Sciatic nerve (tissue), 2 donors: ENCODE measurements at regions of chr21 and their contacts with region 1.

Region 1: DNA sequence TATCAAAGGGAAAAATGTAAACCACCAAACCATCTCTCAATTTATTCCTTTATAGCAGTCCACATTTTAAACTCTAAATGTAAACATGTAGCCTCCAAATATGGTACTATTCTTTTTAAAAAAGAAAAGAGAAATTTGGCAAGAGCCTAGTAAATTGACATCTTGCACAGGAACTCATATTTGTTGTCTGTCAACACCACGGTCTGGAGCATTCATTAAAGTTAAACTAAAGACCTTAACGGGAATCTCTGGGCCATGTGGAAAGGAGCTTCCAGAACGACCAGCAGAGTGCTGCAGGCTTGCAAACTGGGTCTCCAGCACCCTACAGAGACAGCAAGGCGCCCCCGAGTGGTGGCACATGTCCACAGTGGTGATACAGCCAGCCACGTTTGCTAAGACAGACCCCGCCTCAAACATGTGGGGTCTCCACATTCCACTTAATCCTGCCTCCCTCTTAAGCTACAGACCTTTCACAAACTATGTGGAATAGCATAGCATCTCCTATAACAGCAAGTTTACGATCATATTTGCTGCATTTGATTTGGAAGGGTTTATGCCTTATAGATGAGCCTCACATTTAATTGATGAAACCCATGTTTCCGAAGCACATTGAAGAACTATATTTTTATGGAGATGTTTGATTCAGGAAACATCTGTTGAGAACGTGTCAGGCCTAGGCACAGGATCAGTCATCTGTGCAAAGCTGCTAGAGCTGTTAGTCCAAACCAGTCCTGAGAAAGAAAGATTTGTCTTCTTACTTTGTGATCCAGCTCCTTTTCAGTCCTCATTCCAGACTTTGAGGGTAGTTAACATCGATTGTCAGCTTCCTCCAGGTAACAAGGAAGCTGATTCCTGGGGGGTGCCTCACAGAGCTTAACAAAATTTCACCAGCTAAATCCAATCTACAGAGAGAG is 96.4 kb upstream of the BACE2 start:
- DNase-seq: no peak
- ATAC-seq: no peak

Region 2: DNA sequence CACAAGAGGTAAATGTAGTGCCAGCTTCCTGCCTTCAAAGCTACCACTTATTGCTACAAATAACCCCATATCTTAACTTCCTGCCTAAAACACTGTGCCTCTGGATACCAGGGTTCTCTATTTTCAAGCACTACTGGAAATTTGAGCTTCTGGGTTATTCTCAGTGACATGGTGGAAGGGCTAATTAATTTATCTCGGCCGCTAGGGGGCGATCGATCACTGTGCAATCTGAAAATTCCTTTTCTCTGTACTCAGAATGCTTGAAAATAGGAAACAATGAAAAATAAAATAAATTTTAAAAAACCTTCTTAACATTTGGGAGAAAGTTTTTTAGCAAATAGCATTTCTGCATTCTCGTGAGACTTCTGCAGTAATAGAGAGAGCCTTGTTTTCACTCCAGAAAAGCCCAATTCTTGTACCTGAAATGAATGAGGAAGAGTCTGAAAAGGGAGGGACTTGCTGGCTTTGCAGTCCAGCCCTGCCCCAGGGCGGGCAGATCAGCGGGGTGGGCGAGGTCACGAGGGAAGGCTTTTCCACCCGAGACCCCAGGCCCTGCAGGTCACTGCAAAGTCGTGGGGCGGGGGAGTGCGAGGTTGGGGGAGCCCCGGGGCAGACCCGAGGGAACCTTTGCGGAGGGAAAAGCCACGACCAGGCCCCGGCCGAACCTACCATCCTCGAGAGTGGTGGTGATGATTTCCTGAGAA is 927.5 kb before region 1 on chr21:
- intact Hi-C with region 1: loop called (anchors 5 kb)
- DNase-seq: peak; percentile 81
- ATAC-seq: peak; percentile 80

Region 3: DNA sequence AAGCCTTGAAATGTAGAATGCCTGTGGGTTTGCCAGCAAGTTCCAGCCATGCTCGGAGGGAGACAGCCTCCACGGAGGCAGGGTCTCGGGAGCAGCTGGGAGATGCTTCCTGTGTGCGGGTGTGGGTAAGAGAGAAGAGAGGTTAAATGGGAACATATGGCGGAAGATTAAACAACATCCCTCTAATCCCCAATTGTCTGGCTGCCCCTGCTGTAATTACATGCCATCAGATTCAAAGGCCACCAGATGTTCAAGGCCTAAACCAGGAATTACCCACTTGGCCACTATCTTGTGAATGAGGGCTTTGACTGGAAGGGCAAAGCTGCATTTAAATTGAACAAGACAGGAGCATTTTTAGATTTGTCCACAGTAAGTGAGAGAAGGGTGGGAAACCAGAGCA is 15.1 kb after region 1 on chr21:
- intact Hi-C with region 1: no loop called
- DNase-seq: no peak
- ATAC-seq: no peak